ENCODE measurements at regions of chr3 and their contacts with region 1.

Region 1: GRCh38 chr3:51799879-51800749 is 21.1 kb upstream of the IQCF6 start:
- DNase-seq: no peak
- ATAC-seq: peak; percentile 42

Region 2: DNA sequence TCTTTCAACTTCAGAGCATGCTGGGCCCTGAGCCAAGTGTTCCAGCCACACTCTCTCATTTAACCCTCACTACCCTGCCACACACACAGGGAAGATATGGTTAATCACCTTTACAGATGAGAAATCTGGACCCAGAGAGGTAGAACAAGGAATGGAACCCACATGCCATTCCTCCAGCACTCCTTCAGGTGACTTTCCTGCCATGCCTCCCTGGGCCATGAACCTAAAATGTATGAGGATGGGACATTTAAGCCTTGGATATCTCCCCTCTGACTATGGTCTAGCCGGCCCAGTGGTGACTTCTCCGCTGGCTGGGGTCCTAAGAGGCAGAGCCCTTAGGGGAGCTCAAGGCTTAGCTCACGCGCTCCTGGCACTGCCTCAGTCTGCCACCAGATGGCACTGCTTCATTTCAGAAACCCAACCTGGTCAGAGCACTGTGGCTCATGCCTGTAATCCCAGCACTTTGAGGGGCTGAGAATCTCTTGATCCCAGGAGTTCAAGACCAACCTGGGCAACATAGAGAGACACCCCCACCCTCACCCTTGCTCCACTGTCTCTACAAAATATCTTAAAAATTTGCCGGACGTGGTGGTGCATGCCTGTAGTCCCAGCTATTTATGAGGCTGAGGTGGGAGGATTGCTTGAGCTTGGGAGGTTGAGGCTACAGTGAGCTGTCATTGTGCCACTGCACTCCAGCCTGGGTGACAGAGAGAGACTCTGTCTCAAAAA is 298.1 kb before region 1 on chr3:
- intact Hi-C with region 1: loop called (anchors 5 kb)
- DNase-seq: peak; percentile 87
- ATAC-seq: peak; percentile 9